ENCODE measurements at regions of chr12 and their contacts with region 1.

Region 1: GRCh38 chr12:91382081-91382543 is 199.5 kb upstream of the DCN start:
- DNase-seq: peak; percentile 79 to 89
- ATAC-seq: peak; percentile 72 to 92 (median 87)
- H3K4me3 ChIP-seq: peak overlapping the region; percentile 20 to 66 (median 50)
- H3K27ac ChIP-seq: peak overlapping the region; percentile 21 to 84 (median 75)
- H3K4me1 ChIP-seq: peaks cover 0 to 15% (median 4%) of the 10 kb centered on the region in 9 donors
- H3K27me3 ChIP-seq: no peaks in the 10 kb centered on the region
- CTCF ChIP-seq: peak; percentile 77 to 94 (median 90)

Region 2: DNA sequence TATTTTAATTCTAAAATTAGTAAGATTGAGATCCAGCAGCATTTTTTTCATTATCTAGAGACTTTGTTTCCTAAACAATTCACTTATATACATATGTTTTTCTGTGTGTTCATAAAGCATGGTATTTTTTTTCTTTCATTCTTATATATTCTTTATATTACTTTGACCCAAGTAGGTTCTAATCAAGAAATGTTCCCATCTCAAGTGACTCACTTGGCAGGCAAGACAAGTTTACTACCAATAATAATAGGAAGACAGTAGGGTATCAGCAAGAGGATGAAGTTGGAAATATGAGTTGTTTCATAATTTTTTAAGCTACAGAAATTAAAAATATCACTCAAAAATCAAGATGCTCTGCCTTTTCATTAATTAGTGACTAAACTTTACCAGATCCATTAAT is 1060.1 kb before region 1 on chr12:
- intact Hi-C with region 1: no loop called
- DNase-seq: no peak
- ATAC-seq: no peak
- H3K4me3 ChIP-seq: no peak overlapping the region
- H3K27ac ChIP-seq: no peak overlapping the region
- H3K4me1 ChIP-seq: no peaks in the 10 kb centered on the region
- H3K27me3 ChIP-seq: no peaks in the 10 kb centered on the region
- CTCF ChIP-seq: no peak

Region 3: GRCh38 chr12:91577586-91578539 is 195.8 kb after region 1 on chr12:
- intact Hi-C with region 1: loop called in 3 of 10 experiments (anchors 10 kb)
- DNase-seq: no peak
- ATAC-seq: peak in 6 of 8 donors; percentile 39 to 70 (median 61)
- H3K4me3 ChIP-seq: peak overlapping the region in 7 of 10 donors; percentile 16 to 33 (median 26)
- H3K27ac ChIP-seq: peak overlapping the region in 2 of 10 donors; percentile 2 to 11
- H3K4me1 ChIP-seq: peaks cover 0 to 17% (median 9%) of the 10 kb centered on the region in 9 donors
- H3K27me3 ChIP-seq: no peaks in the 10 kb centered on the region
- CTCF ChIP-seq: peak; percentile 56 to 84 (median 74)

Region 4: GRCh38 chr12:92136965-92137721 is 755.0 kb after region 1 on chr12:
- intact Hi-C with region 1: loop called in 6 of 10 experiments (anchors 5 to 10 kb)
- DNase-seq: no peak
- ATAC-seq: no peak
- H3K4me3 ChIP-seq: peak overlapping the region in 5 of 10 donors; percentile 83 to 95 (median 86)
- H3K27ac ChIP-seq: peak overlapping the region in 7 of 10 donors; percentile 2 to 99 (median 40)
- H3K4me1 ChIP-seq: peaks cover 8 to 88% (median 73%) of the 10 kb centered on the region in 9 donors
- H3K27me3 ChIP-seq: no peaks in the 10 kb centered on the region
- CTCF ChIP-seq: no peak

Region 5: GRCh38 chr12:92414170-92415070 is 1032.3 kb after region 1 on chr12:
- intact Hi-C with region 1: loop called in 1 of 10 experiments (anchors 10 kb)
- DNase-seq: no peak
- ATAC-seq: peak in 1 of 8 donors; percentile 14
- H3K4me3 ChIP-seq: no peak overlapping the region
- H3K27ac ChIP-seq: peak overlapping the region in 1 of 10 donors; percentile 29
- H3K4me1 ChIP-seq: peaks cover 0 to 42% (median 24%) of the 10 kb centered on the region in 9 donors
- H3K27me3 ChIP-seq: no peaks in the 10 kb centered on the region
- CTCF ChIP-seq: peak in 2 of 9 donors; percentile 8 to 10

Region 6: GRCh38 chr12:92608151-92609091 is 1226.3 kb after region 1 on chr12:
- intact Hi-C with region 1: loop called in 2 of 10 experiments (anchors 1 to 10 kb)
- DNase-seq: peak in 1 of 2 donors; percentile 13
- ATAC-seq: peak in 4 of 8 donors; percentile 12 to 56 (median 44)
- H3K4me3 ChIP-seq: no peak overlapping the region
- H3K27ac ChIP-seq: no peak overlapping the region
- H3K4me1 ChIP-seq: peaks cover 0 to 31% (median 0%) of the 10 kb centered on the region in 9 donors
- H3K27me3 ChIP-seq: no peaks in the 10 kb centered on the region
- CTCF ChIP-seq: peak; percentile 8 to 70 (median 52)